Activated CD4-positive, alpha-beta memory T cell treated with anti-CD3 and anti-CD28 coated beads for 36 hours (primary cell): ENCODE measurements at regions of chr6 and their contacts with region 1.

Region 1: DNA sequence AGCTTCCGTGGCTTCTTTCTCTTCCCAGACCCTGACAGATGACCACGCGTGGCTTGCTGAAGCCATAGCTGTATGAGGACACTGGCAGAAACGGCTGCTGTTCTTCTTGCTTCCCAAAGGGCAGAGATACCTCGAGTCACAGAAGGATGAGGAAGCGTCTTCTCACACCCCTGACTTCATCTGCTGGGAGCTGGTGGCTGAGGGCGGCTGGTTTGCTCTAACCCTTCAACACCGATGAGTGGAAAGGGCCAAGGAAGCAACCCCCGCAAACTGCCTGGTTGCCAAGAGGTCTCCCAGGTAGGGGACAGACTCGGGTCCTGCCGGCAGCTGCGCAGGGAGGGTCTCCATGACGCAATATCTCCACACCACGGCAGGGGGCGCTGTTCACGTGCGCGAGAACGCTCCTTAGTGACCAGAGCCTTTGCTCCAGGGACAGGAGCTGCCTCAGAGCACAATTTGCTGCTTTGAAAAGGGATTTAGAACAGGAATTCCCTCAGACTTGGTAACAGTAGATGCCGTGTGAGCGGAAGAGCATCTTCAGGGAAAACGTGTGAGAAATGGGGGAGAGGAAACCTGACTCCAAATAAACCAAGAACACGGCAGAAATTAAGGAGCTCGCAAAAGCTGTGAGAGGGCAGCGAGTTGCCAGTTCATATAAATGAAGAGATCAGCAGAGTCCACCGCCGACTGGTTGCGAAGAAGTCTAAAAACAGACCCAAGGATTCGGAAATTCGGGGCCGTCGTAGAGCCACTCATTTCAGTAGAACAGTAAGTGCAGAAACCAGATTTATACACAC is 80.2 kb downstream of the ERMARD start:
- DNase-seq: peak; percentile 80
- H3K4me3 Mint-ChIP-seq: no peak overlapping the region
- H3K27ac Mint-ChIP-seq: no peak overlapping the region
- H3K4me1 Mint-ChIP-seq: peaks cover 4% of the 10 kb centered on the region
- H3K27me3 Mint-ChIP-seq: peaks cover 40% of the 10 kb centered on the region

Region 2: GRCh38 chr6:168823397-168824212 is 1008.0 kb before region 1 on chr6:
- CTCF ChIA-PET with region 1: no interaction called
- POLR2A ChIA-PET with region 1: no interaction called
- intact Hi-C with region 1: no loop called
- DNase-seq: no peak
- H3K4me3 Mint-ChIP-seq: no peak overlapping the region
- H3K27ac Mint-ChIP-seq: no peak overlapping the region
- H3K4me1 Mint-ChIP-seq: no peaks in the 10 kb centered on the region
- H3K27me3 Mint-ChIP-seq: peaks cover 2% of the 10 kb centered on the region

Region 3: GRCh38 chr6:169800668-169801395 is 30.8 kb before region 1 on chr6:
- CTCF ChIA-PET with region 1: interaction called, 14 read pairs
- POLR2A ChIA-PET with region 1: no interaction called
- intact Hi-C with region 1: no loop called
- DNase-seq: no peak
- H3K4me3 Mint-ChIP-seq: no peak overlapping the region
- H3K27ac Mint-ChIP-seq: no peak overlapping the region
- H3K4me1 Mint-ChIP-seq: peaks cover 30% of the 10 kb centered on the region
- H3K27me3 Mint-ChIP-seq: peaks cover 21% of the 10 kb centered on the region

Region 4: DNA sequence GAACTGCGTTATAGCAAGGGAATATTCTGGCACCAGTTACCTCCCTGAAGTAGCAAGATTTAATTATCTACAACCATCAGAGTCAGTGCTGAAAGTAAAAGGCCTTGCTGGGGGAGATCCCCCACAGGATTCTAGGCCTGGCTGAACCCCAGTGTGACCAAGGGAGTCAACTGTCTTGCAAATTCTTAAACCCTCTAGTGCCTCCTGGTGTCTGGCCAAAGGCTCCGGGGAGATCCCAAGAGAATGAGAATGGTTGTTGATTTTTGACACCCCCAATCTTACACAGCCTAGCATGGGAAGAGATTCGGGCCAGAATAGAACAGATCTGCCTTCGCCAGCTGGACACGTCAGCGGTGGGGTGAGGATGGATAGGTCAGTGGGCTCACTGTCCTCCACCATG is 99.2 kb after region 1 on chr6:
- CTCF ChIA-PET with region 1: interaction called, 16 read pairs
- POLR2A ChIA-PET with region 1: no interaction called
- intact Hi-C with region 1: loop called (anchors 1 kb)
- DNase-seq: no peak
- H3K4me3 Mint-ChIP-seq: no peak overlapping the region
- H3K27ac Mint-ChIP-seq: no peak overlapping the region
- H3K4me1 Mint-ChIP-seq: no peaks in the 10 kb centered on the region
- H3K27me3 Mint-ChIP-seq: peaks cover 14% of the 10 kb centered on the region

Region 5: DNA sequence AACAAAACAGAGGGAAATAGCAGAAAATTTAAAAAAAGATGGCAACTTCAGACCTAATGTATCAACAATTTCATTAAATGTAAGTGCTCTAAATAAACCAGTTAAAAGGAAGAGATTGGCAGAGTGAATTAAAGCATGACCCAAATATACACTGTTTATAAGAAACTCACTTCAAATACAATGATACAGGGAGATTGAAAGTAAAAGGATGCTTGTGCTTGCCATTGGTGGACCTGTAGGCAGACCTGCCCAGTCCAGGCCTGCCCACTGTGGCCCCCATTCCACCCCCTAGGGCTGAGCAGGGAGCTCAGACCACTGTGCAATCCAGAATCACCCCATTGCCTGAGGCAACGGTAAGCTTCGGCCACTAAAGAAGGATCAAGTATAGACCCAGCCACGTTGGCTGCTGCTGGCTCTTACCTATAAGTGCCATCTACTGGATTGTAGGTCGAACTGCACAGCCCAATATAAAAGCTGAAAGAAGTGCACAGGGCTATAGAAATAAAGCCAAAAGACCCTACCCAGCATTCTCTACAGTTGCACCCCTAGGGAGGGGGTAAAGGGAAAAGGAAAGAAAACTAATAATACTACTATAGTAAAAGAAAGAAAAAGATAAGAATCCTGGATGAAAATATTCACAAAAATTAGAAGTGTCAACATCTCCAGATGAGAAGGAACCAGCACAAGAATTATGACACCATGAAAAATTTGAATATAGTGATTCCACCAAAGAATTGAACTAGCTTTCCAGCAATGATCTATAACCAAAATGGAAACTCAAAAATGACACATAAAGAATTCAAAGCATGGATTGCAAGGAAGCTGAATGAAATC is 685.4 kb after region 1 on chr6:
- CTCF ChIA-PET with region 1: interaction called, 38 read pairs
- POLR2A ChIA-PET with region 1: no interaction called
- intact Hi-C with region 1: loop called (anchors 1 kb)
- DNase-seq: peak; percentile 46
- H3K4me3 Mint-ChIP-seq: no peak overlapping the region
- H3K27ac Mint-ChIP-seq: no peak overlapping the region
- H3K4me1 Mint-ChIP-seq: no peaks in the 10 kb centered on the region
- H3K27me3 Mint-ChIP-seq: peaks cover 6% of the 10 kb centered on the region